ENCODE measurements at regions of chr11 and their contacts with region 1.

Region 1: DNA sequence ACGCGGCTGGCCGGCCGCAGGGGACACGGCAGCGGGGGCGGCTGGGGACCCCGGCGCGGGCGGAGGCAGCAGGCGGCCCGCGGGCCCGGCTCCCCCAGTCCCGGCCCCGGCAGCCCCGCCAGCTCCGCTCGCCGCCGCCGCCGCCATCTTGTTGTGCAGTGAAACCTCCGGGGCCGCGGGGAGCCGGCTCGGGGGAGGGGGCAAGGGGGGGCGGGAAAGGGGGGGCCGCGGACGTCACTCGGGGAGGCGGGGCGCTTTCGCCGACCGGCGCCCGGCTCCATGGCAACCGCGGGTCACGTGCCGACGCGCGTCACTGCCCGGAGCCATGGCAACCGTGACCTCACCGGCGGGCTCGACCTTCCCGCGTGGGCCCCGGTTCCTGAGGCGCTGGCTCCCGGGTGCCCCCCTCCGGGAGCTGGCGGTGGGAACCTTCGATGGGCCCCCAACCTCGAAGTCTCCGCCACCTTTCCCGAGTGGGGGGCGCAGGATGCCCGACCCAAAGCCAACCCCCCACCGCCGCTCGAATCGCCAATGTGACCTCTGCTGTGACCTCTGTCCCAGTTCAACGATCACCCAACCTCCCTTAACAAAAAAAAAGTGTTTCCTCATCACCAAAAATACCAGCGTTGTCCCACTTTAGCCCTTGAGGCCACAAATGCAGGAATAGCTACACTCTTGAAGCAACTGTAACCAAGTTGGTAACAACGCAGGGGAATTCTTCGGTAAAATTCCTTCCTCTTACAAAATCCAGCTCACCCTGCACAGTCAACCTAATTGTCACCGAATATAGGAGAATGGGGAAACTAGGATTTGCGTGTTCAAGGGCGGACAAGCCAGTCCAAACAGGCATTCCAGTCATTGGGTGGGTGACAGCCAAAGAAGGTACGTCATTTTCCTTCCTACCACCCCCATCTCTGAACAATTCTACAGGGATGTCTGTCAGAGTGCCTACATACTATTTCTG is at the start of gene SIK3:
- DNase-seq: peak; percentile 96
- ATAC-seq: peak; percentile 74
- H3K4me3 Mint-ChIP-seq: peak within 1 kb of the TSS; percentile 95
- H3K27ac Mint-ChIP-seq: peak within 1 kb of the TSS; percentile 97
- H3K4me1 Mint-ChIP-seq: peaks cover 55% of the 10 kb centered on the region
- H3K27me3 Mint-ChIP-seq: no peaks in the 10 kb centered on the region
- CTCF ChIP-seq: no peak
- total RNA-seq, gene SIK3: 75.0 and 88.4 TPM in 2 replicates

Region 2: GRCh38 chr11:116725434-116726221 is 372.9 kb before region 1 on chr11:
- CTCF ChIA-PET with region 1: no interaction called
- POLR2A ChIA-PET with region 1: no interaction called
- intact Hi-C with region 1: no loop called
- DNase-seq: no peak
- ATAC-seq: no peak
- H3K4me3 Mint-ChIP-seq: no peak overlapping the region
- H3K27ac Mint-ChIP-seq: no peak overlapping the region
- H3K4me1 Mint-ChIP-seq: no peaks in the 10 kb centered on the region
- H3K27me3 Mint-ChIP-seq: peaks cover 22% of the 10 kb centered on the region
- CTCF ChIP-seq: no peak

Region 3: DNA sequence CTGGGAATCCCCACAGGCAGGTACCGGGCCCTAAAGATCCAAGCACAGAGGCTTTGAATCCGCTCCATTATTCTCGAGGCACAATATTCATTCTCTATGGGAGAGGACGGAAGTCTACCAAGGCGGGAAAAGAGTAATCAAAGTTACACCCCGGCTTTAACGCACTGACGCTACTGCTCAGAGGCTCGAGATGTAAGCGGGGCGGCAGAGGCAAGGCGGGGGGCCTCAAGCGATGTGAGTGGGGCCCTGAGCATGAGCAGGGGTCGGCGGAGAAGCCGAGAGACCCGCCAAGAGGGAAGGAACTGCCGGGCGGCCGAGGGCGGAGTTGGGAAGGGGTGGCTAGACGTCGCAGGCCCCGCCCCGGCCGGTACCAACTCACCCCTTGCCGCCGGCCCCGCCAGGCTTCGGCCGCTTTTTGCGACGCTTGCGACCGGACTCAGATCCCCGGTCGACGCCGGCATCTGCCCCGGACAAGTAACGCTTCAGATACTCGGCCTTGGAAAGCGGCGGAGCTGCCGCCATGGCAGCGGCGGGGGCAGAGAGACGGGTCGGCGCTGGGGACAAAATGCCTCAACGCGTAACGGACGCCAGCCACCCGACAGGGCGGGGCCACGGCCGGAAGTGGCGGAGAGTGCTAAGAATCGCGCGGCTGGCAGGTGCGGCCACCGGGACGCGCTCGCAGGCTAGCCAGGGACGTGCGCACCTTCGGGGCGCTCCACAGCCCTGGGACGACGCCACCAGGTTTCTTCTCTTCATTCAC is 325.9 kb before region 1 on chr11 and contains the start of gene BUD13:
- CTCF ChIA-PET with region 1: no interaction called
- POLR2A ChIA-PET with region 1: no interaction called
- intact Hi-C with region 1: loop called (anchors 5 kb)
- DNase-seq: peak; percentile 96
- ATAC-seq: peak; percentile 89
- H3K4me3 Mint-ChIP-seq: peak within 1 kb of the TSS; percentile 98
- H3K27ac Mint-ChIP-seq: peak within 1 kb of the TSS; percentile 96
- H3K4me1 Mint-ChIP-seq: peaks cover 37% of the 10 kb centered on the region
- H3K27me3 Mint-ChIP-seq: no peaks in the 10 kb centered on the region
- CTCF ChIP-seq: no peak
- total RNA-seq, gene BUD13: 18.4 and 18.8 TPM in 2 replicates

Region 4: GRCh38 chr11:116895048-116895757 is 203.3 kb before region 1 on chr11:
- CTCF ChIA-PET with region 1: interaction called, 8 read pairs
- POLR2A ChIA-PET with region 1: no interaction called
- intact Hi-C with region 1: loop called (anchors 1 kb)
- DNase-seq: peak; percentile 24
- ATAC-seq: peak; percentile 67
- H3K4me3 Mint-ChIP-seq: no peak overlapping the region
- H3K27ac Mint-ChIP-seq: peak overlapping the region; percentile 42
- H3K4me1 Mint-ChIP-seq: peaks cover 12% of the 10 kb centered on the region
- H3K27me3 Mint-ChIP-seq: no peaks in the 10 kb centered on the region
- CTCF ChIP-seq: no peak

Region 5: GRCh38 chr11:116986521-116987105 is 111.9 kb before region 1 on chr11:
- CTCF ChIA-PET with region 1: no interaction called
- POLR2A ChIA-PET with region 1: interaction called, 11 read pairs
- intact Hi-C with region 1: no loop called
- DNase-seq: no peak
- ATAC-seq: peak; percentile 78
- H3K4me3 Mint-ChIP-seq: peak overlapping the region; percentile 52
- H3K27ac Mint-ChIP-seq: peak overlapping the region; percentile 74
- H3K4me1 Mint-ChIP-seq: peaks cover 89% of the 10 kb centered on the region
- H3K27me3 Mint-ChIP-seq: no peaks in the 10 kb centered on the region
- CTCF ChIP-seq: no peak

Region 6: DNA sequence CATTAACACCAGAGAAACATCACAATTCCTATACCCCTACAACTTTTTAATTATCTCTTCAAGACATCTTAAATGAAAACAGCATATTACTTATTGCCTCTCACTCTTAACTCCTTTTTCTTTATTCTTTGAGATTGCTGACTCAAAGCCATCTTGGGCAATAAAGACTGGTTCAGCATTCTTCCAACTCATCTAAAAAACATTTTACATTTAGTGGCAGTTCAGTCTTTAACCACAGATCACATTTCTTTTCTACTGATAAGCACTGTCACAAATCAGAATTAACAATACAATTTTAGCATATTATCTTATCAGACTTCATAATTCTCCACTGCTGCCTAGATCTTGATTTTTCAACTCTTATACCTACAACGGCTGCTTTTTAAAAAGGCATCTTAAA is 34.3 kb before region 1 on chr11:
- CTCF ChIA-PET with region 1: no interaction called
- POLR2A ChIA-PET with region 1: interaction called, 18 read pairs
- intact Hi-C with region 1: loop called (anchors 1 kb)
- DNase-seq: no peak
- ATAC-seq: no peak
- H3K4me3 Mint-ChIP-seq: peak overlapping the region; percentile 37
- H3K27ac Mint-ChIP-seq: peak overlapping the region; percentile 71
- H3K4me1 Mint-ChIP-seq: peaks cover 78% of the 10 kb centered on the region
- H3K27me3 Mint-ChIP-seq: no peaks in the 10 kb centered on the region
- CTCF ChIP-seq: no peak

Region 7: GRCh38 chr11:117232092-117232878 is 133.7 kb after region 1 on chr11 and contains the start of gene RNF214:
- CTCF ChIA-PET with region 1: interaction called, 5 read pairs
- POLR2A ChIA-PET with region 1: interaction called, 6 read pairs
- intact Hi-C with region 1: loop called (anchors 2 kb)
- DNase-seq: peak; percentile 82
- ATAC-seq: peak; percentile 74
- H3K4me3 Mint-ChIP-seq: peak within 1 kb of the TSS; percentile 100
- H3K27ac Mint-ChIP-seq: peak within 1 kb of the TSS; percentile 100
- H3K4me1 Mint-ChIP-seq: peaks cover 43% of the 10 kb centered on the region
- H3K27me3 Mint-ChIP-seq: no peaks in the 10 kb centered on the region
- CTCF ChIP-seq: peak; percentile 69
- total RNA-seq, gene RNF214: 18.7 and 22.3 TPM in 2 replicates

Measured in activated B cell treated with CpG ODN at 0.5 μM for 24 hours (primary cell).